Left ventricle myocardium inferior (tissue), 1 donor: ENCODE measurements at regions of chr15 and their contacts with region 1.

Region 1: DNA sequence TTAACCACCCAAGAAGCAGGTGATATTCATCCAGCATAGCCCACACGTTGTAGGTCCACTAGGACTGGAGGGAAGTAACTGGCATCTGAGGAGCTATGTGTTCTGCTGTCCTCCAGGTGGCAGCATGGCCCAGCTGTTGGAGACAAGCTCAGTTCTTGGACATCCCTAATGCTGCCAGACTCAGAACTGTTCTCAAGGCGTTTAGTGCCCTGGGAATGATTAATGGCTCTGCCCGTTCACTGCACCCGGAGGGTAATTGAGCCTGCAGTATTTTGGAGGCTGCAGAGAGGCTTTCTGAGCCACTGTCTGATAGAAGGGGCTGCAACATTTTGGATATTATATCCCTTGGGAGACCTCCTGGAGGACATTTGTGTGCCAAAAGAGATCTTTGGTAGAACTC is 521.2 kb upstream of the SEMA6D start:
- DNase-seq: peak; percentile 67
- H3K4me3 ChIP-seq: no peak overlapping the region
- H3K27ac ChIP-seq: no peak overlapping the region
- H3K4me1 ChIP-seq: no peaks in the 10 kb centered on the region
- H3K27me3 ChIP-seq: no peaks in the 10 kb centered on the region
- CTCF ChIP-seq: peak; percentile 87

Region 2: GRCh38 chr15:47289656-47290055 is 93.6 kb after region 1 on chr15:
- intact Hi-C with region 1: no loop called
- DNase-seq: no peak
- H3K4me3 ChIP-seq: no peak overlapping the region
- H3K27ac ChIP-seq: no peak overlapping the region
- H3K4me1 ChIP-seq: no peaks in the 10 kb centered on the region
- H3K27me3 ChIP-seq: no peaks in the 10 kb centered on the region
- CTCF ChIP-seq: no peak

Region 3: DNA sequence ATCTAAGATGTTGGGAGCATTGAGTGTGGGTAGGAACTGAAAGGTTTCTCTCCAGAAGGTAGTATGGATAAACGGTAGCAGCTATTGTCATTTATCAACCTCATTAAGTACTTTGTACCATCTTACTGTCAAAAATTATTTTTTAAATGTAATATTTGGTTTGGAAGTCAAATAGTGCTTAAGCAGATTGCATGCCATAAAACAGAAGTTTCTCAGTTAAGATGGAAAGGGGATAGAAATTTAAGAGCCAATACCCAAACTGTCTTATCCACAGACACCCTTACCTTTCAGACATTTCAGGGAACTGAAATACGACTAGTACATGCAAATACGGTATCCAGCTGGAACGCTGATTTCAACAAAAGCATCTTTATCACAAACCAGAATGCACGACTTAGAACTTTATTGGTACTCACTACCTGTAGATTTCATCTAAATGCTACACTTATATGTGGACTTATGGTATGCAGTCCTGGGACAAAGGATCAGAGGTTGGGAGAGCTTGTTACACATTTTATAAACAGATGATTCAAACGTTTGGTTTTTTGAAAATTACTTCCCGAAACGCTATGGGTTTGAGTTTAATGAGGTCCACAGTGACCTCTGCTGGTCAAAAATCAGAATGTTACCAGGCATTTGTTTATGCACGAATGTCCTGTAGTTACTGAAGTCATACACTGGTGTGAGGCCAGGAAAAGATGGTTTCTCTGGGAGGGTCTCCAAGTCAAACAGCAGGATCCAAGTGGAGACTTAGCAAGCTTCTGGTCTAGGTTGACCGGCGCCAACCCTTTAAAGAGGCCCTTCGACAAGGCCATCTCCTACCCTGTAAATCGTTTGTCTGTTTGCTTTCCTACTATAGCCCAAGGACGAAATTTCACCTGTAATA is 1089.5 kb after region 1 on chr15:
- intact Hi-C with region 1: loop called (anchors 10 kb)
- DNase-seq: no peak
- H3K4me3 ChIP-seq: peak overlapping the region; percentile 47
- H3K27ac ChIP-seq: no peak overlapping the region
- H3K4me1 ChIP-seq: peaks cover 25% of the 10 kb centered on the region
- H3K27me3 ChIP-seq: peaks cover 9% of the 10 kb centered on the region
- CTCF ChIP-seq: peak; percentile 79